ENCODE measurements at regions of chr12 and their contacts with region 1.

Region 1: DNA sequence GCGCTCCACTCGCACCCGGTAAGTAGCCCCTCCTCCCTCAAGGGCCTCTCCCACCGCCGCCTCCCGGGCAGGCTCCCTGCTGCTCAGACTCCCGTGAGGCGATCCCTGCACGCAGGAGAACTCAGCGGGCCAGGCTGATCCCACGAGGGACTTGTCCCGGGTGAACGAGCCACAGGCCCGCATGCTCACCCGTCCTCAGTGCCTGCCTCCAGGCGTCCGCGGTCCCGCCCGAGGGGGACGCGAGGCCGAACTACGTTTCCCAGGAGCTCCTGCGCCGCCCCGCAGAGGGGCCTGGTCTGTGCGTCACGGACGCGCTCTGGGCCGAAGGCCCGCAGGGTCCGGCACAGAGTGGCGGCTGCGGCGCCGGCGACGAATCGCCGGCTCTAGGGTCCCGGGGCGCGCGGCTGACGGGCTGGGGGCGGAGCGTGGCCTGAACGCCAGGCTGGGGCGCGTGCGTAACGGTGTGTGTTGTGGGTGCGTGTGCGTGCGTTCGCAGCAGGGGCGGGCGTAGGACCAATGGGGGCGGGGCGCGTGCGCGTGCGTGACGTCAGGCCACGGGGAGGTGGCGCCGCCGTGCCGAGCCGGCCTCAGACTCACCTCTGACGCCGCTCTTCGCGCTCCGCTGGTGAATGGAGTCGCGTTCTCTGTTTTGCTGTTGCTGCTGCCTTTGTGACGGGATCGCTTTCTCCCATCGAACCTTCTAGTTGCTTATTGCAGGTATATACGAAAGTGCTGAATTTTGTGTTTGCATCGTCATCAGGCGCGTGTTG is at the starts of genes ZNF10 and ZNF891:
- DNase-seq: peak; percentile 95
- H3K4me3 ChIP-seq: peak within 1 kb of the TSS; percentile 85 to 91
- H3K27ac ChIP-seq: peak within 1 kb of the TSS; percentile 95 to 96
- H3K4me1 ChIP-seq: no peaks in the 10 kb centered on the region
- H3K27me3 ChIP-seq: no peaks in the 10 kb centered on the region
- CTCF ChIP-seq: peak in 2 of 4 experiments; percentile 15 to 21
- POLR2A ChIP-seq: peak; percentile 87
- total RNA-seq, gene ZNF10: 11.6 to 20.3 TPM
- total RNA-seq, gene ZNF891: 1.9 to 3.0 TPM

Region 2: DNA sequence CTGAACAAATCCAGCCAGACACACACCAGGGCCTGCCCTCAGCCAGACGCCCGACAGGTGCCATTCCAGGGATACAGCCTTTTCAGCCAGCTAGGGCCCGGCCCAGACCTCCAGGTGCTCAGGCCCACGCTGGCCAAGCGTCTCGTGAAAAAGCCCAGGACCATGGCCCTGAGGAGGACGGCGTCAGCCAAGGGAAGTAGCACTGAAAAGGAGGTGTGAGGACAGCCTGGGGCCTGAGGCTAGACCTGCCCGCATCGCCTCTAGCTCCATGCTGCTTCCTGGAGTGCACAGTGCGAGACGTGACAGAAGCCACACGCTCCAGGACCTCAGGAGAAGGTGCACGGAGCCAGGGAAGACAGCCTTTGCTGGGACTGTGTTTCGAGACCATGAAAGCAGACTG is 331.4 kb before region 1 on chr12:
- intact Hi-C with region 1: no loop called
- DNase-seq: no peak
- H3K4me3 ChIP-seq: no peak overlapping the region
- H3K27ac ChIP-seq: no peak overlapping the region
- H3K4me1 ChIP-seq: no peaks in the 10 kb centered on the region
- H3K27me3 ChIP-seq: no peaks in the 10 kb centered on the region
- CTCF ChIP-seq: no peak
- POLR2A ChIP-seq: no peak

Region 3: DNA sequence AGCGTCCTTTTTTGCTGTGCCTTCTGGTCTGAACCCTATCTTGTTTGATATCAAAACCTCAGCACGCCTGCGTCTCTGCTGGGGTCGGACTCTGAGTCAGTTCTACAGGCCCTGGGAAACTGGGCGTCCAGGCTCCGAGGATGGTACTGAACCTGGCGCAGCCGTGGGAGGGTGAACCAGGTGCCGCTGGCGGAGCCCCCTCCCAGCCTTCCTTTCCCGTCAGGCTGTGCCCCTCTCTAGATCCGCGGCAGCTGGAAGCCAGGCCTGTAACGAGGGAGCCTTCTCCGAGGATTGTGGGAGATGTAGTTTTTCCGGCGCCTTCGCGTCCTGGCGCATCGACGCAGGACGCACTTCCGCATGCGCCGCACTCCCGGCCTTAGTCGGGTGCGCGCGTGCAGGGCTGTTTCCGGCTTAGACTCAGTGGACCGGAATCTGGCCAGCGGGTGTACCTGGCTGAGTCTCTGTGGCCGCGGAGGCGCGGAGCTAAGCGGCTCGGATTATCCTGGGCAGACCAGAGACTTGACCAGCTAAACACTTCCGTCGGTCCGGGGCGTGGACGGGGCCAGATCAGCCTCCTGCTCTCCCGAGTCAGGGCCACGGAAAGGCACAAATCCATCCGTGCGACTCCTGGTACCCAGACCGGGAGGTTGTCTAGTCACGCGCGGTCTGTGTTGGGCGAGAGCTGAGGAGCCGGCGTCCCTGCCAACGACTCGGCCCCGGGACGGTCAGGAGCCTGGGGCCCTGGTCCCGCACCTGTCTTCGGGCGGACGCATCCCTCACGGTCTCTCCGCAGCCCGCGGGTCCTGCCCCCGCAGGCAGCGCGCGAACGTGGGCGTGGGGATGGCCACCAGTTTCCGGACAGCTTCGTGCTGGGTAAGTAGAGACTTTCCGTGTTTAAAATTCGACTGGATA is 144.0 kb before region 1 on chr12 and contains the start of gene ZNF26:
- intact Hi-C with region 1: loop called (anchors 2 kb)
- DNase-seq: peak; percentile 92
- H3K4me3 ChIP-seq: peak within 1 kb of the TSS; percentile 72 to 81
- H3K27ac ChIP-seq: peak within 1 kb of the TSS; percentile 79 to 82
- H3K4me1 ChIP-seq: no peaks in the 10 kb centered on the region
- H3K27me3 ChIP-seq: no peaks in the 10 kb centered on the region
- CTCF ChIP-seq: peak in 2 of 4 experiments; percentile 17 to 19
- POLR2A ChIP-seq: peak; percentile 17
- total RNA-seq, gene ZNF26: 14.2 to 17.0 TPM

Region 4: GRCh38 chr12:133037207-133038005 is 92.8 kb before region 1 on chr12 and contains the start of gene ZNF84:
- intact Hi-C with region 1: loop called (anchors 5 kb)
- DNase-seq: peak; percentile 96
- H3K4me3 ChIP-seq: peak within 1 kb of the TSS; percentile 78 to 92
- H3K27ac ChIP-seq: peak within 1 kb of the TSS; percentile 94 to 96
- H3K4me1 ChIP-seq: no peaks in the 10 kb centered on the region
- H3K27me3 ChIP-seq: no peaks in the 10 kb centered on the region
- CTCF ChIP-seq: peak in 1 of 4 experiments; percentile 17
- POLR2A ChIP-seq: peak; percentile 71
- total RNA-seq, gene ZNF84: 22.2 to 52.0 TPM

Region 5: DNA sequence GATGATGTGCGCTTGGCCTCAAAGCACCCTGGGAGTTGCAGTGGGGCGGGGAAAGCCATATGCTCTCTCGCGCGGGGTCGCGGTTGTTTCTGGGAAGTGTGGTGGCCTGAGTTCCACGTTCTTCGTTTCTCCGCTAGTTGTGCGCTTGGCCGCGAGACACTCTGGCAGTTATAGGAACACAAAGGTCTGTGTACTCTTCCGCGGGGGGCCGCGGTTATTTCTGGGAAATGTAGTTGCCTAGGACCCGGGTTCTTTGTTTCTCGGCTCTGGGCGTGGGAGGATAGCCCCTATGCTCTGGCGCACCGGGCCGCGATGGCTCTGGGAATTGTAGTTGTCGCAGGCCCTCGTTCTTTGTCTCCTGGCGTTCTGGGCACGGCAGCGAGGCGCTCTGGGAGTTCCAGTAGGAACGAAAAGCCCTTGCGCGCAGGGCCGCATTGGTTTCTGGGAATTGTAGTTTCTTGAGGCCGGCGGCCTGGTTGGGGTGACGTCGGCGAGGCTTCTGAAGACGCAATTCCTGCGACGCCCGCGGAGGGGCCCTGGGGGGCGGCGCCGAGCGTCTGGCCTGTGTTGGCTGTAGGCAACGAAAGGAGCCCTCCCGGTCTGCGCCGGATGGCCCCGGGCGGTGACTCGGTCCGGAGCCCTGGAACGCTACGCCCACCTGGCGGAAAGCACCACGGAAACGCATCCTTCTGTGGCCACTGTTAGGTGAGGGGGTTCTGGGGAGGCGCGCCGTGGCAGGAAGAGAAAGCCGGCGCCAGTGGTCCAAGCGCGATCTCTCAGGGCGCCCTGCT is 49.7 kb before region 1 on chr12 and contains the start of gene ZNF140:
- intact Hi-C with region 1: loop called (anchors 2 kb)
- DNase-seq: peak; percentile 96
- H3K4me3 ChIP-seq: peak within 1 kb of the TSS; percentile 68 to 86
- H3K27ac ChIP-seq: peak within 1 kb of the TSS; percentile 97 to 98
- H3K4me1 ChIP-seq: no peaks in the 10 kb centered on the region
- H3K27me3 ChIP-seq: no peaks in the 10 kb centered on the region
- CTCF ChIP-seq: peak in 3 of 4 experiments; percentile 4 to 66 (median 53)
- POLR2A ChIP-seq: peak; percentile 54
- total RNA-seq, gene ZNF140: 18.2 to 23.7 TPM

Region 6: DNA sequence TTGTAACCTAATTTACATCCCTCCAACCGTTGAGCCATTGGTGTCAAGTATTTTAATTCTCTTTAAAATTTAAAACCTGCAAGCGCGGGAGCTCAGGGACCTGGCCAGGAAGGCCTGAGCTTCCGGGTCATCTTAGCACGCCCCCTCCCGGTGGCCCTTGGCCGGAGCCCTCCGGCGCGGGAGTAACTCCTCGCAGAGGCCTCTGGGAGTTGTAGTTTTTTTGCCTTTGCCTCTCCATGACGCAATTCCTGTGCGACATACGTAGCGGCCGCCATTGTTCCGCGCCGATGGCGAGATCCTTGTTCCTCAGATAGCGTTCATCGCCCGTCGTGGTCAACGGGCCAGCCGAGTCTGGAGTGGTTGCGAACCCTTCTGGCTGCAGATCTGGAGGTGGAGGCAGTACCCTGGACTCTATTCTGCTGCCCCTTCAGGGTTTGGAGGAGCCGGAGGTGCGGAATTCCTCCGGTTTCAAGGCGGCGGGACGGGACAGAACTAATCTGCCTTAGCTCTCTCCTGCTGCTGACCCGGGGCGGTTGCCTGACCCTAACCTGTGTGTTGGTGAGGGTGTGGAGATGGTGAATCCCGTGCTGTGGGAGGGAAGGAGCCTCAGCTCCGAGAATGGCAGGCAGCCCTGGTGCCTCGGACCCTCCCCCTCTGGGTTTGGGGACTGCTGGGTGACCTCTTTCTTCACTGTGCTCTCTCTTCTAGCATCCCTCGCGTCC is 51.2 kb after region 1 on chr12 and contains the start of gene ZNF268:
- intact Hi-C with region 1: loop called (anchors 2 kb)
- DNase-seq: peak; percentile 82
- H3K4me3 ChIP-seq: peak within 1 kb of the TSS; percentile 69 to 71
- H3K27ac ChIP-seq: peak within 1 kb of the TSS; percentile 36 to 38
- H3K4me1 ChIP-seq: no peaks in the 10 kb centered on the region
- H3K27me3 ChIP-seq: no peaks in the 10 kb centered on the region
- CTCF ChIP-seq: peak; percentile 65 to 88 (median 84)
- POLR2A ChIP-seq: no peak
- total RNA-seq, gene ZNF268: 22.6 to 33.2 TPM

Measured in prostate gland (tissue), 2 donors.